Breast epithelium (tissue), 4 donors: ENCODE measurements at regions of chr13 and their contacts with region 1.

Region 1: DNA sequence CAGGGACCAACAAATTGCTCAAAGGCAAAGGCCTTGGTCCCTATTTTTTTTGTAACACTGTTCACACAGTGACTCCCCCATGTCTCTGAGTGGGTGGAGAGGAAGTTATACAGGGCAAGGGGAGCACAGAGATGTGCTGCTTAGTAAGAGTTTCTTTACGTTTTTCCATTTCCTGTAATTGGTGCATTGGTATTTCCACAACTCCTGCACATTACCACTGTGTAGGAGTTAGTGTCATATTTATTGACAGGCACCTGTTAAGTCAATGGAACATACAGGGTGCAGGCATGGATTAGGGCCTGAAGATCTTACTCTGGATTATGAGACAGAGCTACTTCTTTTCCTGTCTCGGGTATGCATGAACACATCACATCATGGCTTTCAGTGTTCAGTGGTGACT is 45.2 kb downstream of the SOX21 start:
- DNase-seq: no peak
- H3K4me3 ChIP-seq: no peak overlapping the region
- H3K27ac ChIP-seq: no peak overlapping the region
- H3K4me1 ChIP-seq: no peaks in the 10 kb centered on the region
- H3K27me3 ChIP-seq: peaks cover 0 to 10% of the 10 kb centered on the region in 2 donors
- CTCF ChIP-seq: no peak
- POLR2A ChIP-seq: no peak

Region 2: DNA sequence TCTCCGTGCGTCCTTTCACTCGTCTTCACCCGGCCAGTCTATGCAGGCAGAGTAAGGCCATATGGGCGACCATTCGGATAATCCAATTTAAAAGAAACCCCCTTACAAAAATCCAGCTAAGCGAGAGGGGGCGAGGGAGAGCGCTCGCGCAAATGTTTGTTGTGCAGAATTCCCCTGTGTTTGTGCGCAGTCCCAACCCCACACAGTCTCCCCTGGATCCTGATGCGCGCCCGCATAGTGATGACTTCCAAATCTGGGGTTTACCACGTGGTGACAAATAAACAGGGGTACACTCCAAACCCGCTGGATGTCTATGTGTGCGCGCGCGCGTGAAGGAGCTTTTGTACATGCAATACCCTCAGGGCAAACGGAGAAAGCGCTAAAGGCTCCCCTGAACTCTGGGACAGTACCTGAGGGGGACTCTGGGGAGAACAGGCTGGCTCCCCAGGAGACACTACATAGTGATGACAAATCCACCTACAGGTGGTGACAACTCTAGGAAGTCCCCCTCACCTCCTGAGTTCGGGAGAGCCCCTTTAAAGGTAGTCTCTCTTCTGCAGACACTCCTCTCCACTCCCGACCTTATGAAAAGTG is 36.6 kb after region 1 on chr13:
- intact Hi-C with region 1: loop called (anchors 2 kb)
- DNase-seq: no peak
- H3K4me3 ChIP-seq: no peak overlapping the region
- H3K27ac ChIP-seq: no peak overlapping the region
- H3K4me1 ChIP-seq: no peaks in the 10 kb centered on the region
- H3K27me3 ChIP-seq: peaks cover 0 to 96% of the 10 kb centered on the region in 2 donors
- CTCF ChIP-seq: no peak
- POLR2A ChIP-seq: no peak

Region 3: DNA sequence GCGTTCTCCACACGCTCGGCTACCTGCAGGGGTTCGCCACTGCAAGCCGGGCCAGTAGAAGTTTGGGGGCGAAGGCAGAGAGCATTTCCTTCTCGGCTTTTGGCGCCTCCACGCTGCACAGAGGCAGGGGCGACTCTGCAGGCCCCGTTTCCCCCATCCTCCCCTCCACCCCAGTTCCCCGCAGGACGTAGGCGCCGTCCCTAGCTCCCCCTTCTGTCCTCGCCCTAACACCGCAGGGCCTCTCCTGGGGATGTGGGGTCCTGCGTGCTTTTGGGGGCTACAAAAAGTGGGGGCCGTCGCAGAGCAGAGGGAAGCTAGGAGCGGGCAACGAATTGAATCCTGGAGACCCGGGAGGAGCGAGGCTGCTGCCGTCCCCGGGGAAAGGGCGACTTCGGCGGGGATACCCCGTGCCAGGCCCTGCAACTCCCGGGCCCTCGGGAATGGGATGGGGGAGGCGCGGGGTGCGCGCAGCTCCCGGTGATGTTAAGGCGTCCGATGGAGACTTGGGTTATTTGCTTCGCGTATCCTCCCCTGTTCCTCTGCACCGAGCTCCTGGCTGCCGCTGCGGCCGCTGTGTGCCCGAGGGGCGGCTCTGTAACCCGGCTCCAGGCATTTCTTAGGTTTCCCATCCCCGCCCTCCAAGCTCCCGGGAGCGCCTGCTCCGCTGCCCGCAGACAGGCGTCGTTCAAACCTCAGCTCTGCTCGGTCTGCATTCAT is 301.0 kb after region 1 on chr13:
- intact Hi-C with region 1: no loop called
- DNase-seq: no peak
- H3K4me3 ChIP-seq: peak overlapping the region; percentile 18 to 51 (median 28)
- H3K27ac ChIP-seq: no peak overlapping the region
- H3K4me1 ChIP-seq: no peaks in the 10 kb centered on the region
- H3K27me3 ChIP-seq: peaks cover 0 to 42% of the 10 kb centered on the region in 2 donors
- CTCF ChIP-seq: no peak
- POLR2A ChIP-seq: no peak